ENCODE measurements at regions of chr19 and their contacts with region 1.

Region 1: DNA sequence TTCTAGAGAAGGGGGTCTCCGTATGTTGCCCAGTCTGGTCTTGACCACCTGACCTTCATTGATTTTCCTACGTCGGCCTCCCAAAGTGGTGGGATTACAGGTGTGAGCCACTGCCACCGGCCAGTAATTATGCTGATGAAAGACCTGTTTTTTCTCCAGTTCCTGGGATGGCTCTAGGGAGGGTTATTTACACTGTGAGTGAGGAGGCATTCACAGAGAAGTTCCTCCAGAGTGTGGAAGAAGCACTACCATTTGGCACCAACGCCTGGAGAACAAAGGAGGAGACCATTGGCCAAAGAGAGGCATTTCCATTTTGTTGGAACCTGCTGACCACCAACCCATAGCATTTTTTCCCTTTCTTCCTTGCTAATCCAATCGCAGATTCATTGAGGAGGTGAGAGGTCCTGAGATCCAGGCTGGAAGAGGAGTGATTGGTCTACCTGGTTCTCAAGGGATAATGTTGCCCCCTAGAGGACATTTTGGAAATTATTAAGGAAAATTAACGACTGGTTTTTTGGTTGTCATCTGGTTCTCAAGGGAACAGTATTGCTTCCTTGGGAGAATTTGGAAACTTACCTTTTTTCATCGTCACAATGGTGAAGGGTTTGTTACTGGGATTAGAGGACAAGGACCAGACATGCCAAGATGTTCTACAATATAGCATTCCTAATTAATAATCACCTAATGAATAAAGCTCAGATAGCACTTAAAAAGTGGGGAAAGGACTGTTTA is 5.5 kb upstream of the SAE1 start:
- DNase-seq: peak in 2 of 4 donors; percentile 70 to 76
- ATAC-seq: peak; percentile 89
- H3K4me3 ChIP-seq: no peak overlapping the region
- H3K27ac ChIP-seq: no peak overlapping the region
- H3K4me1 ChIP-seq: peaks cover 0 to 7% of the 10 kb centered on the region in 2 donors
- H3K27me3 ChIP-seq: no peaks in the 10 kb centered on the region
- CTCF ChIP-seq: peak; percentile 55 to 72

Region 2: GRCh38 chr19:47081111-47081510 is 44.0 kb before region 1 on chr19:
- intact Hi-C with region 1: loop called in 1 of 2 experiments (anchors 5 kb)
- DNase-seq: peak in 1 of 4 donors; percentile 25
- ATAC-seq: no peak
- H3K4me3 ChIP-seq: no peak overlapping the region
- H3K27ac ChIP-seq: no peak overlapping the region
- H3K4me1 ChIP-seq: peaks cover 4 to 10% of the 10 kb centered on the region in 2 donors
- H3K27me3 ChIP-seq: no peaks in the 10 kb centered on the region
- CTCF ChIP-seq: no peak

Region 3: GRCh38 chr19:47305309-47305751 is 180.2 kb after region 1 on chr19:
- intact Hi-C with region 1: no loop called
- DNase-seq: peak in 2 of 4 donors; percentile 71 to 91
- ATAC-seq: peak; percentile 85
- H3K4me3 ChIP-seq: no peak overlapping the region
- H3K27ac ChIP-seq: no peak overlapping the region
- H3K4me1 ChIP-seq: peaks cover 0 to 37% of the 10 kb centered on the region in 2 donors
- H3K27me3 ChIP-seq: peaks cover 0 to 9% of the 10 kb centered on the region in 2 donors
- CTCF ChIP-seq: peak; percentile 88 to 94

Region 4: DNA sequence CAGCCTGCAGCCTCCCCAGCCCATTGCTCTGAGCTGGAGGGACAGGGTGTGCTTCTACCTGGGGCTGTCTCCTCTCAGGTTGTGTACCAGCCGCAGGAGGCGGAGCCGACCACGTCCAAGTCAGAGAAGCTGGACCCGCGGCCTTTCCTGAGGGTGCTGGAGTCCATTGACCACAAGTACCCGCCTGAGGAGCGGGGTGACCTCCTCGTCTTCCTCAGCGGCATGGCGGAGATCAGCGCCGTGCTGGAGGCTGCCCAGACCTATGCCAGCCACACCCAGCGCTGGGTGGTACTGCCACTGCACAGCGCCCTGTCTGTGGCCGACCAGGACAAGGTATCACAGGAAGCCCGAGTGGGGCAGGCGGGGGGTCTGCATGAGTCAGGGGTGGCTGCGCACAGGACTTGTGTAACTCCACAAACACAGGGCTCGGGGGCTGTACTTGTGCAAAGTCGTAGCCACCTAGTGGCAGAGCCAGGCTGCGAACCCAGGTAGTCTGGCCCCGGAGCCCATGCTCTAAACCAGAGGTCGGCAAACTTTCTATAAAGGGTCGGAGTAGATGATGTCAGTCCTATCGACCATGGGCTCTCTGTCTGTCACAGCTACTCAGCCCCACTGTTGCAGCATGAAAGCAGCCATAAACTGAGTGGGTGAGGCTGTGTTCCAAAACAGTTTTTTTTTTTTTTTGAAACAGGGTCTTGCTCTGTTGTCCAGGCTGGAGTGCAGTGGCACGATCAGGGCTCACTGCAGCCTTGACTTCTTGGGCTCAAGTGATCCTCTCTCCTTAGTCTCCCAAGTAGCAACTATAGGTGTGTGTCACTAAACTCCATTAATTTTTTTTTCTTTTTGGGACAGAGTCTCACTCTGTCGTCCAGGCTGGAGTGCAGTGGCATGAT is 232.9 kb after region 1 on chr19:
- intact Hi-C with region 1: no loop called
- DNase-seq: no peak
- ATAC-seq: no peak
- H3K4me3 ChIP-seq: no peak overlapping the region
- H3K27ac ChIP-seq: no peak overlapping the region
- H3K4me1 ChIP-seq: peaks cover 0 to 6% of the 10 kb centered on the region in 2 donors
- H3K27me3 ChIP-seq: no peaks in the 10 kb centered on the region
- CTCF ChIP-seq: no peak